Lower leg skin (tissue), 4 donors: ENCODE measurements at regions of chr10 and their contacts with region 1.

Region 1: GRCh38 chr10:65320236-65321026 is 1605.4 kb upstream of the LRRTM3 start:
- DNase-seq: no peak
- H3K4me3 ChIP-seq: no peak overlapping the region
- CTCF ChIP-seq: no peak
- POLR2A ChIP-seq: no peak

Region 2: GRCh38 chr10:64379898-64380297 is 940.5 kb before region 1 on chr10:
- intact Hi-C with region 1: no loop called
- DNase-seq: no peak
- H3K4me3 ChIP-seq: no peak overlapping the region
- CTCF ChIP-seq: no peak
- POLR2A ChIP-seq: no peak

Region 3: DNA sequence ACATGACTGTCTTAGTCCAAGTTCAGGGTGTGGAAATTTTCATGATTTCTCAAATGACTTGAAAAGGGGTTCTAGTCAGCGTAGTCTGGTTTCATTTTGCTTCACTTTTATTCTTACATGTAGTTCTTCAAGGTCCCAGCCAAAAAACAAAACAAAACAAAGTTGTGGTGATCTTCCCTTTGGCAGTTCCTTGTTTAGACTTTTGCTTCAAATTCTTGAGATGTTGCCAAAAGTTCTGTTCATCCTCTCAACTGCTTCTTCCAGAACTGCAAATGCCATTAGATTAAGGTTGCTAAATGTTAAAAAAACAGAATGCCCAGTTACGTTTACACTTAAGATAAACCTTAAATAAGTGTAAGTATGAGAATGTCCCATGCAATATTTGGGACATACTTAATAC is 1234.6 kb after region 1 on chr10:
- intact Hi-C with region 1: loop called (anchors 5 kb)
- DNase-seq: no peak
- H3K4me3 ChIP-seq: no peak overlapping the region
- CTCF ChIP-seq: no peak
- POLR2A ChIP-seq: no peak